Activated T-helper 1 cell treated with anti-CD3 and anti-CD28 coated beads, Interleukin-12 subunit alpha, Interleukin-12 subunit beta, Interleukin-2, Interleukin-4 antibody, amounts not matched to agents 30 ng/mL and 10 ng/mL and 1 ng/mL, durations not matched to agents 14 hours and 24 hours and 36 hours (primary cell): ENCODE measurements at regions of chrX and their contacts with region 1.

Region 1: DNA sequence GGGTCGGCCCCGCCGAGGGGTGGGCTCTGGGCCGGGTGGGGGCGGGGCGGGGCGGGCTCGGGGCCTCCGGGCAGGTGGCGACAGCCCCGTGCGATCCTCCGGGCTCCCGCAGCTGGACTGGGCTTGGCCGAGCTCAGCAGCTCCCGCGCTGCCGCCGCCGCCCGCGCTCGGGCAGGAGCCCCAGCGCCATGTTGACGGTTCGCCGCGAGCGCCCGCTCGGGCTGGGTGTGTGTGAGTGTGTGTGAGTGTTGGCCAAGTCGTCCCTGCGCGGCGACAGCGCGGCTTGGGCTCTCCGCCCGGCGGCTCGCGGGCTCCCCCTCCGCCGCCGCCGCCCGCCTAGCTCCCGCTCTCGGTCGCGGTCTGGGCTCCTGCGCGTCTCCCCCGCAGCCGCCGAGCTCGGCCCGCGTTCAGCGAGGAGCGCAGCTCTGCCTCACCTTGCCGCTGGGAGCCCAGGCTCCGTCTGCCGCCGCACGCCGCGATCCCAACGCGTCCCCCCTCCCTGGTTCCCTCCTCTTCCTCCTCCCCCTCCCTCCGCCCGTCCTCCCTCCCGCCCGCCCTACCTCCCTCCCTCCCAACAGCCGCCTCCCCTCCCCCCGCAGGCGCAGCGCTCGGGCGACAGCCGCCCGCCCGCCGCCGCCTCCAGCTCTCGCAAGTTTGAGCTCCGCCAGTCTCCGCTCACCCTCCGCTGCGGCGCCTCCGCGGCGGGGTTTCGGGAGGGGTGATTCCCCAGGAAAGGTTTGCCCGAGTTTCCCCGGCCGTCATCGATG is at the start of gene BCOR:
- DNase-seq: peak; percentile 60
- H3K4me3 Mint-ChIP-seq: peak within 1 kb of the TSS; percentile 89
- H3K27ac Mint-ChIP-seq: peak within 1 kb of the TSS; percentile 88
- H3K4me1 Mint-ChIP-seq: peaks cover 18% of the 10 kb centered on the region
- H3K27me3 Mint-ChIP-seq: no peaks in the 10 kb centered on the region
- total RNA-seq, gene BCOR: 65.2 and 72.0 TPM in 2 replicates

Region 2: GRCh38 chrX:39613482-39613921 is 484.2 kb before region 1 on chrX:
- intact Hi-C with region 1: loop called (anchors 5 kb)
- DNase-seq: peak; percentile 3
- H3K4me3 Mint-ChIP-seq: peak overlapping the region; percentile 87
- H3K27ac Mint-ChIP-seq: peak overlapping the region; percentile 95
- H3K4me1 Mint-ChIP-seq: peaks cover 42% of the 10 kb centered on the region
- H3K27me3 Mint-ChIP-seq: peaks cover 5% of the 10 kb centered on the region

Region 3: DNA sequence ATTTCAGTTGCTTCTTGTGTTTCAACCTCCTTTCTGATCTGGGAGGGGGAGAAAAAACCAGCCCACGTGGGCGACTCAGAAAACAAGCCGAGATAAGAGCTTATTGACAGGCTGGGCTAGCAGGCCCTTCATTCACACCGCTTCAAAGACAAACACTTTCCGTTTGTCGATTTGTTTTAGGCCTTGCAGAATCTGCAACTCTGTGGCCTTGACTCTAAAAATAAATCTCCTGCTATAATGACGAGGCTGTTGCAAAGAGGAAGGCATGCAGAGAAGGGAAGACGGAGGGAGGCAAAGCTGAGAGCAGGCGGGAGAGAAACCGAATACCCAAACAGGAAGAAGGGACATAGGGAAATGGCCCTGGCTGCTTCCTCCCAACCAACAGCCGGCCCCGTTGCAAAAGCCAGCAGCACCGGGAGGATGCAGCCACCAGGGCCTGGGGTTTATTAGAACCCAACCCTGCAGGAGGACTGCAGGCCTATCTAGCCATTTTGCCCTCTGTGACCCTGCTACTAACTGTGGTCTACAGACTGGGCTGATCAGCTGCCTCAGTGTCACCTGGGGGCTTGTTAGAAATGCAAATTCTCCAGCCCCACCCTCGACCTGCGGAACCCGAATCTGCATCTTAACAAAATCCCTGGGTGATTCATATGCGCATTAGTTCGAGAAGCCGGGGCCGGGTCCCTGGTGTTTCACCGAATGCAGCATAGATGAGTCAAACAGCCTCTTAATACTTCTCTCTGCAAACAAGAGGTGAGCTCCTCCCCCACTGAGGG is 325.4 kb before region 1 on chrX:
- intact Hi-C with region 1: loop called (anchors 5 kb)
- DNase-seq: peak; percentile 22
- H3K4me3 Mint-ChIP-seq: peak overlapping the region; percentile 73
- H3K27ac Mint-ChIP-seq: peak overlapping the region; percentile 98
- H3K4me1 Mint-ChIP-seq: peaks cover 48% of the 10 kb centered on the region
- H3K27me3 Mint-ChIP-seq: no peaks in the 10 kb centered on the region

Region 4: DNA sequence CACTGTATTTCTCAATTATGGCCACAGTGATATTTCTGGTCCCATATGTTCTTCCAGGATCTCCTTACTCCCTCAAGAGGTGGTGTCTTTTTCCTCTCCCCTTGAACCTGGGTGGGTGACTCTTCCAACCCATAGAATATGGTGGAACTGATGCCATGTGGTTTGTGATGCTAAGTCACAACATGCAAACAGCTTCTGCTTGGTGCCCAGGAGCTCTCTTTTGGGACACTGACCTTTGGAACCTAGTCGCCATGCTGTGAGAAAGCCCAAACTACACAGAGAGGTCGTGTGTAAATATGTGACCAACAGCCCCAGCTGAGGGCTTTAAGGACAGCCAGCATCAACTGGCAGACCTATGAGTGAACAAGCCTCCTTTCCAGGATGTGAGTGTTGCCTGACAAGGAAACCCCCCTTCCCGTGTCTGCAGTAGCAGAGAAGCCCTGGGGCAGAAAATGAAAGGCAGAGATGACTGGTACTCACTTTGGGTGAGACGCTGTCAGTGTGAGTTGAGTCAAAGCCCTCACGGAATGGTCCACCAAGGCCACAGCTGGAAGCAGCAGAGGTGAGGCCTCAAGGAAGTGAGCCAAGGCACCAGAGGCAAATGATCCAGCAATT is 223.4 kb before region 1 on chrX:
- intact Hi-C with region 1: loop called (anchors 5 kb)
- DNase-seq: peak; percentile 68
- H3K4me3 Mint-ChIP-seq: peak overlapping the region; percentile 53
- H3K27ac Mint-ChIP-seq: peak overlapping the region; percentile 88
- H3K4me1 Mint-ChIP-seq: peaks cover 47% of the 10 kb centered on the region
- H3K27me3 Mint-ChIP-seq: peaks cover 6% of the 10 kb centered on the region

Region 5: DNA sequence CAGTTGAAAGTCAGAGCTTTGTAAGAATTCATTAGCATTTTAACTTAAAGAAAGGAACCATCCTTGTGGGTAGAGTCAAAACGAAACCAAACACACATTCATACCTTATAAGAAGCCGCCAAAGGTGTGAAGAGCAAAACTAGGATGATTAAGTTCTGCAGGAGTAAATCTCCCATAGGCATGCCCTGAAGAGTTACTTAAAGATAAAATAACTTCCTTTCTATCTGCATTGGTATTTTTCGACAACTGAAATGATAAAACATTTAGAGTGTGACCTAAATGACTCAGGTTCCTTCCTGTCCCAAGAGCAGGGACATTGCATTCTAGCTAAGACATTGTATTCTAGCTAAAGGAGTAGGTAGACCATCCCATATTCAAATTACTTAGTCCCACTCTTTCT is 75.3 kb before region 1 on chrX:
- intact Hi-C with region 1: no loop called
- DNase-seq: no peak
- H3K4me3 Mint-ChIP-seq: peak overlapping the region; percentile 29
- H3K27ac Mint-ChIP-seq: peak overlapping the region; percentile 43
- H3K4me1 Mint-ChIP-seq: peaks cover 29% of the 10 kb centered on the region
- H3K27me3 Mint-ChIP-seq: no peaks in the 10 kb centered on the region

Region 6: GRCh38 chrX:40108959-40109287 is 11.2 kb after region 1 on chrX:
- intact Hi-C with region 1: loop called (anchors 1 kb)
- DNase-seq: peak; percentile 30
- H3K4me3 Mint-ChIP-seq: no peak overlapping the region
- H3K27ac Mint-ChIP-seq: no peak overlapping the region
- H3K4me1 Mint-ChIP-seq: peaks cover 6% of the 10 kb centered on the region
- H3K27me3 Mint-ChIP-seq: peaks cover 3% of the 10 kb centered on the region

Region 7: GRCh38 chrX:40175511-40176350 is 78.1 kb after region 1 on chrX:
- intact Hi-C with region 1: loop called (anchors 2 kb)
- DNase-seq: peak; percentile 61
- H3K4me3 Mint-ChIP-seq: peak overlapping the region; percentile 82
- H3K27ac Mint-ChIP-seq: peak overlapping the region; percentile 99
- H3K4me1 Mint-ChIP-seq: peaks cover 37% of the 10 kb centered on the region
- H3K27me3 Mint-ChIP-seq: no peaks in the 10 kb centered on the region